ENCODE measurements at regions of chr19 and their contacts with region 1.

Region 1: GRCh38 chr19:35484252-35485036 is 5.8 kb downstream of the KRTDAP start:
- DNase-seq: peak; percentile 37
- ATAC-seq: peak; percentile 100
- H3K4me3 Mint-ChIP-seq: peak overlapping the region; percentile 16
- H3K27ac Mint-ChIP-seq: peak overlapping the region; percentile 35
- H3K4me1 Mint-ChIP-seq: peaks cover 19% of the 10 kb centered on the region
- H3K27me3 Mint-ChIP-seq: no peaks in the 10 kb centered on the region
- CTCF ChIP-seq: no peak

Region 2: GRCh38 chr19:35462476-35462953 is 21.9 kb before region 1 on chr19:
- CTCF ChIA-PET with region 1: no interaction called
- POLR2A ChIA-PET with region 1: interaction called, 4 read pairs
- intact Hi-C with region 1: loop called (anchors 1 kb)
- DNase-seq: peak; percentile 35
- ATAC-seq: peak; percentile 76
- H3K4me3 Mint-ChIP-seq: peak overlapping the region; percentile 76
- H3K27ac Mint-ChIP-seq: peak overlapping the region; percentile 85
- H3K4me1 Mint-ChIP-seq: peaks cover 64% of the 10 kb centered on the region
- H3K27me3 Mint-ChIP-seq: no peaks in the 10 kb centered on the region
- CTCF ChIP-seq: no peak

Region 3: GRCh38 chr19:35495107-35496064 is 10.9 kb after region 1 on chr19:
- CTCF ChIA-PET with region 1: interaction called, 11 read pairs
- POLR2A ChIA-PET with region 1: interaction called, 3 read pairs
- intact Hi-C with region 1: no loop called
- DNase-seq: peak; percentile 62
- ATAC-seq: peak; percentile 100
- H3K4me3 Mint-ChIP-seq: no peak overlapping the region
- H3K27ac Mint-ChIP-seq: no peak overlapping the region
- H3K4me1 Mint-ChIP-seq: peaks cover 8% of the 10 kb centered on the region
- H3K27me3 Mint-ChIP-seq: peaks cover 5% of the 10 kb centered on the region
- CTCF ChIP-seq: peak; percentile 67

Measured in activated B cell treated with CpG ODN at 0.5 μM for 24 hours (primary cell).